ENCODE measurements at regions of chr3 and their contacts with region 1.

Region 1: DNA sequence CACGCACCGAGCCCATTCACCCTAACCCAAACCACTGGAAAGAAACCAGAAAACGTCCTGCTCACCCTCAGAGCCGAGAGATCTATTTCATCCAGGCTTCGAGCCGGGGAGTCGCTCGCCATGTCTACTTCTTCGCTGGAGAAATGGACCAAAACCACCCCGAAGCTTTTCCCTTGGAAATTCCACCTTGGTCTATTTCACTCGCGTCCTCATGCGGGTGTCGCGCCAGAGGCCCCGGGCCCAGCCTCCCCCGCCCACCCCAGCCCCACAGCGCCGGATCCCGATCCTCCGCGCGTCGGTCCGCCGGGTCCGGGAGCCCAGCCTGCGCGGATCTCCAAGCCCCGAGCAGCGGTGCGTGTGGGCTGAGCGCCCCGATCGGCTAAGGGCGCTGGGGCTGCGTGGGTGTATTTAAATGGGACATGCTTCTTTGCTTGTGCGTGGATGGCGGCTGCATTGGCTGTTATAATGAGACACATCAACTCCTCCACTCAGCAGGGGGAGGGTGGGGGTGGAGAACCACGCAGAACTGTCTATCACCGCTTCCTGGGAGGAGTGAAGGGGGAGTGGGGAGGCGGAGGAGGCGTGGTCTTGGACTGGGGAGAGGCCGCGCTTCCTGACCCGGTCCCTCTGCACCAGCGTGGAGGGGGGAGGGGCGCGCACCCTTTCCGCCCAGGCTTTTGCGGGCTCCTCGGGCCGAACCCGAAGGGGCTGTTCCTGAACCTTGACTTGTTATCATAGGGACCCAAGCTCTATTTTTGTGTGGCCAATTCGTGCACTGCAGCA is at the start of gene TNIK:
- DNase-seq: peak; percentile 89
- ATAC-seq: peak; percentile 94
- H3K4me3 ChIP-seq: peak within 1 kb of the TSS; percentile 86
- H3K27ac ChIP-seq: peak within 1 kb of the TSS; percentile 62
- H3K4me1 ChIP-seq: peaks cover 3% of the 10 kb centered on the region
- H3K27me3 ChIP-seq: no peaks in the 10 kb centered on the region
- CTCF ChIP-seq: 0 out of 2 replicates have a peak, but pooled peaks have one; percentile 10
- POLR2A ChIP-seq: no peak; the same call in 1 of the 2 replicates
- RAD21 ChIP-seq: no peak; the same call in 1 of the 2 replicates
- total RNA-seq, gene TNIK: 6.3 and 8.3 TPM in 2 replicates

Region 2: GRCh38 chr3:170961616-170962400 is 498.3 kb before region 1 on chr3:
- CTCF ChIA-PET with region 1: no interaction called
- POLR2A ChIA-PET with region 1: no interaction called
- dilution Hi-C with region 1: no loop called
- in situ Hi-C with region 1: no loop called
- intact Hi-C with region 1: loop called (anchors 2 kb)
- DNase-seq: peak; percentile 54
- ATAC-seq: peak; percentile 75
- H3K4me3 ChIP-seq: no peak overlapping the region
- H3K27ac ChIP-seq: no peak overlapping the region
- H3K4me1 ChIP-seq: peaks cover 4% of the 10 kb centered on the region; the same call in 1 of the 2 replicates
- H3K27me3 ChIP-seq: no peaks in the 10 kb centered on the region
- CTCF ChIP-seq: peak; percentile 71
- POLR2A ChIP-seq: no peak
- RAD21 ChIP-seq: peak; percentile 78

Region 3: DNA sequence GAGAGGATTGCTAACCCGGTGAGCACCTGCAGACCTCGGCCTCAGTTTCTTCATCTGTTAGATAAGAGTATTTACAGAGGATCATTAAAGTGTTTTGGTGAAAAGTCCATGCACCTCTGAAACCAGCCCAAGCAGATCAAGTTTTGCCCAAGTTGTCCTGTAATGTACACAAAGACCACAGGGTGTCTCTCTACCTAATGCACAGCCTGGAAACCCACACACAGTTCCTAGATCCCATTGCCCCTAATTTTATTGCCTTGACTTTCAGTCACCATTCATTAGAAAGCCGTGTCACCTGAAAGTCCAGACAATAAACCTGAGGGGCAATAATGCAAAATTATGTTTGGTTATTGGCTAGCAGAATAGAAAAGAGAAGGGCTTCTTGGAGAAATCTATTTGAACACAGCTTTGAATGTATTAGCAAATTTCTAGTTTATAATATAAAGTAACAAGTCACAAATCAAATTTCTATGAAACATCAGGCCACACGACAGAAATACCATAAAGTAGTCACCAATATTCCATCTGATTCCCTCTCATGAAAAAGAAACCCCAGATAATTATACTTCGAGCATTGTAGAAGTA is 272.3 kb before region 1 on chr3:
- CTCF ChIA-PET with region 1: no interaction called
- POLR2A ChIA-PET with region 1: no interaction called
- dilution Hi-C with region 1: no loop called
- in situ Hi-C with region 1: no loop called
- intact Hi-C with region 1: loop called (anchors 1 kb)
- DNase-seq: peak; percentile 48
- ATAC-seq: peak; percentile 73
- H3K4me3 ChIP-seq: no peak overlapping the region
- H3K27ac ChIP-seq: no peak overlapping the region
- H3K4me1 ChIP-seq: 0 out of 2 replicates have a peak, but pooled peaks cover 1% of the 10 kb centered on the region
- H3K27me3 ChIP-seq: no peaks in the 10 kb centered on the region
- CTCF ChIP-seq: peak; percentile 60
- POLR2A ChIP-seq: no peak
- RAD21 ChIP-seq: peak; percentile 76

Region 4: GRCh38 chr3:171374661-171375285 is 85.4 kb before region 1 on chr3:
- CTCF ChIA-PET with region 1: no interaction called
- POLR2A ChIA-PET with region 1: no interaction called
- dilution Hi-C with region 1: no loop called
- in situ Hi-C with region 1: no loop called
- intact Hi-C with region 1: loop called (anchors 5 kb)
- DNase-seq: peak; percentile 85
- ATAC-seq: peak; percentile 54
- H3K4me3 ChIP-seq: no peak overlapping the region
- H3K27ac ChIP-seq: no peak overlapping the region
- H3K4me1 ChIP-seq: peaks cover 17% of the 10 kb centered on the region
- H3K27me3 ChIP-seq: no peaks in the 10 kb centered on the region
- CTCF ChIP-seq: no peak
- POLR2A ChIP-seq: no peak
- RAD21 ChIP-seq: no peak

Region 5: DNA sequence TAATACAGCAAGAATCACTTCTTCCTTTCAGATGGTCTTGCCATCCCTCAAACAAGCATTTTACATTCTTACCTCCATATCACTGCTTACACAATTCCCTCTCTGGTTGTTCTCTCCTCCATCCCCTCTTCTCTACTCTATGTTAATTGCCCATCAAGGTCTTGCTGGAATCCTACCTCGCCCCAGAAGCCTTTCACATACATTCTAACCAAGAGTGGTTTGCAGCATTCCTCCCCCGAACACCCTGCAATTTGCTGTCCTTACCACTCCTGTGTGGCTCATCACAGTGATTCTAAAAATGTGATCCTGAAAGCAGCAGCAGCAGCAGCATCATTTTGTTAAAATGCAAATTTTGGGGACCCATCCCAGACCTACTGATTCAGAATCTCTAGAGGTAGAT is 30.5 kb before region 1 on chr3:
- CTCF ChIA-PET with region 1: no interaction called
- POLR2A ChIA-PET with region 1: no interaction called
- dilution Hi-C with region 1: no loop called
- in situ Hi-C with region 1: no loop called
- intact Hi-C with region 1: no loop called
- DNase-seq: no peak
- ATAC-seq: no peak
- H3K4me3 ChIP-seq: no peak overlapping the region
- H3K27ac ChIP-seq: no peak overlapping the region
- H3K4me1 ChIP-seq: no peaks in the 10 kb centered on the region
- H3K27me3 ChIP-seq: no peaks in the 10 kb centered on the region; the same call in 1 of the 2 replicates
- CTCF ChIP-seq: no peak
- POLR2A ChIP-seq: no peak
- RAD21 ChIP-seq: no peak

Region 6: GRCh38 chr3:171566803-171567422 is 106.8 kb after region 1 on chr3:
- CTCF ChIA-PET with region 1: no interaction called
- POLR2A ChIA-PET with region 1: no interaction called
- dilution Hi-C with region 1: no loop called
- in situ Hi-C with region 1: no loop called
- intact Hi-C with region 1: loop called (anchors 1 kb)
- DNase-seq: peak; percentile 46
- ATAC-seq: peak; percentile 68; the same call in 1 of the 2 replicates
- H3K4me3 ChIP-seq: no peak overlapping the region
- H3K27ac ChIP-seq: no peak overlapping the region
- H3K4me1 ChIP-seq: peaks cover 3% of the 10 kb centered on the region
- H3K27me3 ChIP-seq: peaks cover 3% of the 10 kb centered on the region; the same call in 1 of the 2 replicates
- CTCF ChIP-seq: peak; percentile 83
- POLR2A ChIP-seq: no peak
- RAD21 ChIP-seq: peak; percentile 90

Measured in IMR-90 (cell line).